Left cardiac atrium (tissue), 4 donors: ENCODE measurements at regions of chr3 and their contacts with region 1.

Region 1: DNA sequence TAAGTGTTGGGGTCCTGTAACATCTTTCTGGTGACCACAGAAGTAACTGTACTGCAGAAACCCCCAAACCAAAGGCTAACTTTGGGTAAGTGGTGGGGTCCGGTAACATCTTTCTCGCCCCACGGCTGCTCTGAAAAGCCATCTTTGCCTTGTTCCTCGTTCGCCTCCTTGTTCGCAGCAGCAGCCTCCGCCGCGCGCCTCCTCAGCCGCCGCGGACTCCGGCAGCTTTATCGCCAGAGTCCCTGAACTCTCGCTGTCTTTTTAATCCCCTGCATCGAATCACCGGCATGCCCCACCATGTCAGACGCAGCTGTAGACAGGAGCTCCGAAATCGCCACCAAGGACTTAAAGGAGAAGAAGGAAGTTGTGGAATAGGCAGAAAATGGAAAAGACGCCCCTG is 316.8 kb downstream of the TUSC7 start:
- DNase-seq: no peak
- ATAC-seq: no peak

Region 2: DNA sequence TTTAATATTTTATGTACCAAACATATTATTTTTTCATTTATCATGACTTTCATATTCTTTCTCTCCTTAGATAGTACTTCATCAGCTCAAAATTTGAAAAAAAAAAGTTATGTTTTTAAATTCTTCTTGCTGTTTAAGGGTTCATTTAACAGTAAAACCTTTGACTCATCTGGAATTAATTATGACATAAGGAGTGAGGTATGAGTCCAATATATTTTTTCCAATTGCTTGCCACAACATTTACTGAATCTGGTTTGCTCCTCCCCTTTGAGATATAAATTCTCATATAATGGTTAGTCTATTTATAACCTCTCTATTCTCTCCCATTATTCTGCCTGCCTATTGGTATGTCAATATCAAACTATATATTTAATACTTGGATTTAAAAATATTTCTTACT is 71.0 kb after region 1 on chr3:
- intact Hi-C with region 1: no loop called
- DNase-seq: no peak
- ATAC-seq: no peak

Region 3: GRCh38 chr3:117165601-117166051 is 139.2 kb after region 1 on chr3:
- intact Hi-C with region 1: no loop called
- DNase-seq: no peak
- ATAC-seq: no peak

Region 4: GRCh38 chr3:117526470-117527079 is 500.2 kb after region 1 on chr3:
- intact Hi-C with region 1: loop called in 1 of 2 experiments (anchors 10 kb)
- DNase-seq: no peak
- ATAC-seq: no peak